ENCODE measurements at regions of chr20 and their contacts with region 1.

Region 1: DNA sequence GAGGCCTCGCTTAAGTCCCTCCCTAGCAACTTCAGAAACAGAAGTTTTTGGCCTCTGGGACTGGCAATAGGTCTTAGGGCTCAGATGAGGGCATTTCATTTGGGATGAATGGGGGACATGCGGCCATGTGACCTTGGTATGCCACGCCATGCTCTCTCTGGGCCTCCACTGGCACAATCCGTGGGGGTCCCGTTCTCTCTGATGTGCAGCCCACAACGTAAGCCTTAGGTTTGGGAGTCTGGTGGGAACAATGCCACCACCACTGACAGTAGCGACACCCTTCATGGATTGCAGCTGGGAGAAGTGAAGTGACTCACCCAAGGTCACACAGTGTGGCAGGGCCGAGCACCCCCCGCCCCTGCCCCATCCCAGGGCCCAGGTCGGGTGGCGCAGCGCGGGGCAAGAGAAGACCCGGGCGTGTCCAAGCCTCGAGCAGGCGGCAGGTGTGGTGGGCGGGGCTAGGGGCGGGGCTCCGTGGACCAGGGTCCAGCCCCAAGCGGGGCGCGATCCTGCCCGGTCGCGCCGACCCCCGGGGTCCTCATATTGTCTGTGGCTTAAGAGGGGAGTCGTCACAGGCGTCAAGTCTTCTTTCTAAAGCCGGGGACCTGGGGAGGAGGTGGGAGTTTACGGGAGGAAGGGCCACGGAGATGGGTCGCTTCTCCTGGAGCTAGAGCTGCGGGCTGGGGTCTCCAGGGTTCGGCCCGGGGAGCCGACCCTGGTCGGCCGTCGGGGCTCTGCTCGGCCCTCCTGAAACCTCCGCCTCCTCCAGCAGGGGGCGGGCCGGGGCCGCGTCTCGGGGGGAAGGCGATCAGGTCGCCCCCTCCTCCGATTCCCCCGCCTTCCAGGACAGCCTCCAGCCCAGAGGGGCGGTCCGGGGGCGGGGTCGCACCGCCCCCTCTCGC is 698 bp upstream of the CEBPB start:
- DNase-seq: peak; percentile 85
- H3K4me3 Mint-ChIP-seq: peak overlapping the region; percentile 90
- H3K27ac Mint-ChIP-seq: no peak overlapping the region
- H3K4me1 Mint-ChIP-seq: peaks cover 35% of the 10 kb centered on the region
- H3K27me3 Mint-ChIP-seq: no peaks in the 10 kb centered on the region
- CTCF ChIP-seq: peak; percentile 69

Region 2: DNA sequence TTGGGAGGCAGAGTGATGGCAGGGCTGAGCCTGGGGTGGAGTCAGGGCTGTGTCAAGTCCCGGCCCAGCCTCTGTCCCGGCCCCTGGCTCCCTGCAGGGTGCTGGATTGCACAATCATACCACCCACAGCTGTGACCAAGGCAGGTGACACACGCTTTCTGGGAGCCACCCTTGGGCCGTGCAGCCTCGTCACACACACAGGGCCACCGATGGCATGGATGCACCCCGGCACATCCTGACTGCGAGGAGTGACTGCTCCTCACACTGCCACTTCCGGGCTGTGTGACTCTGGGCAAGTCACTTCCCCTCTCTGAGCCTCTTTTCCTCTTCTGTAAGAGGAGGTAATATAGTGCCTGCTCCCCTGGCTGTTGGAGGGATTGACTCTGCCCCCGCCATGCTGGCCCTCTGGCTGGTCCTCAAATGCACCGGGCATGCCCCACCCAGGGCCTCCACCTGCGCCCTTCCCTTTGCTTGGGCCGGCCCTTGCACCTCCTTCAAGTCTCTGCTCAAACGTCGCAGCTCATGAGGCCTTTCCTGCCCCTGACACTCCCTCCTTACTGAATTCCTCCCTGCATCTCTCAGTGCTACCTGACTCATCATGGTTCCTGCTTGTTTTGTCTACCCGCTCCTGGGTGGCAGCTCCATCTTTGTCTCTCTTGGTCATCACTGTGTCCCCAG is 94.1 kb after region 1 on chr20:
- CTCF ChIA-PET with region 1: no interaction called
- POLR2A ChIA-PET with region 1: interaction called, 3 read pairs
- intact Hi-C with region 1: loop called (anchors 1 kb)
- DNase-seq: peak; percentile 67
- H3K4me3 Mint-ChIP-seq: no peak overlapping the region
- H3K27ac Mint-ChIP-seq: peak overlapping the region; percentile 1
- H3K4me1 Mint-ChIP-seq: peaks cover 23% of the 10 kb centered on the region
- H3K27me3 Mint-ChIP-seq: no peaks in the 10 kb centered on the region
- CTCF ChIP-seq: no peak

Region 3: DNA sequence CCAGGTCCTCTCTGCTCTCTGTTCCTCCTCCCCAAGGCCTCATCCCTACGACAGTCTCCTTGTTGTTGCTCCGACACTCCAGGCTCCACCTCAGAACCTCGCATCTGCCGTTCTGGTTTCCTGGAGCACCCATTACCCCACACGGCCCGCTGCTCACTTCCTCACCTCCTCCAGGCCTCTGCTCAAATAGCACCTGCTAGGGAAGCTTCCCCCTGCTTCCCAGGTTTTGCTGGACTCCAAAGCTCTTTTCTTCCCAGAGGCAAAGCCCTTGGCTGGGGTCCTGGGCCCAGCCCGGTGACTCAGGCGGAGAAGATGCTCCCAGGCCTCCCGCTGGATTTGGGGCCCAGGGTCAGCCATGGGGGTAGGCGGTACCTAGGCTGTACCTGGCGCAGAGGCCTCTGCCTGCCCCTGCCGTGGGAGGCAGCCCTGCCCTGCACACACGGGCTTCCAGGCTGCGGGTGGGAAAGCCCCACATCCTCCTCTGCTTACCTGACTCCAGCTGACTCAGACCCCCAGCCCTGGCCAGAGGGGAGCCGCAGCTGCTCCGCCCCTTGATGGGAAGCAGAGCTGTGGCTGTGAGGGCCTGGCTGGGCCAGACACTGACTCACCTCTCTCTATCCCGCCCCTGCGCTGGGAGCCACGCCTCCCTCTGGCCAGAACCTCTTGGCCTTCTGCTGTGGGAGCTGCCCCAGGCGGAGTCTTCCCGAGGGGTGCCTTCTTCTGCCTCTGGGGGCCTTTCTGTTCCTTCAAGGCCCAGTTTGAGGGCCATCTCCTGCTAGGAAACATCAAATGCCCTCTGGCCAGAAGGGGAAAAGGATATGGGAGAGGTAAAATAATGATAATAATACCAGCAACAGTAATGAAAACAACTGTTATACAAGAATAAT is 131.2 kb after region 1 on chr20:
- CTCF ChIA-PET with region 1: no interaction called
- POLR2A ChIA-PET with region 1: interaction called, 19 read pairs
- intact Hi-C with region 1: no loop called
- DNase-seq: peak; percentile 97
- H3K4me3 Mint-ChIP-seq: peak overlapping the region; percentile 85
- H3K27ac Mint-ChIP-seq: peak overlapping the region; percentile 92
- H3K4me1 Mint-ChIP-seq: peaks cover 32% of the 10 kb centered on the region
- H3K27me3 Mint-ChIP-seq: no peaks in the 10 kb centered on the region
- CTCF ChIP-seq: no peak

Region 4: GRCh38 chr20:50415516-50416113 is 225.7 kb after region 1 on chr20:
- CTCF ChIA-PET with region 1: interaction called, 6 read pairs
- POLR2A ChIA-PET with region 1: interaction called, 79 read pairs
- intact Hi-C with region 1: no loop called
- DNase-seq: peak; percentile 99
- H3K4me3 Mint-ChIP-seq: peak overlapping the region; percentile 59
- H3K27ac Mint-ChIP-seq: peak overlapping the region; percentile 96
- H3K4me1 Mint-ChIP-seq: peaks cover 43% of the 10 kb centered on the region
- H3K27me3 Mint-ChIP-seq: no peaks in the 10 kb centered on the region
- CTCF ChIP-seq: no peak

Region 5: GRCh38 chr20:50575847-50576720 is 386.2 kb after region 1 on chr20:
- CTCF ChIA-PET with region 1: interaction called, 11 read pairs
- POLR2A ChIA-PET with region 1: interaction called, 8 read pairs
- intact Hi-C with region 1: loop called (anchors 1 kb)
- DNase-seq: peak; percentile 63
- H3K4me3 Mint-ChIP-seq: no peak overlapping the region
- H3K27ac Mint-ChIP-seq: no peak overlapping the region
- H3K4me1 Mint-ChIP-seq: peaks cover 21% of the 10 kb centered on the region
- H3K27me3 Mint-ChIP-seq: no peaks in the 10 kb centered on the region
- CTCF ChIP-seq: peak; percentile 56

Region 6: DNA sequence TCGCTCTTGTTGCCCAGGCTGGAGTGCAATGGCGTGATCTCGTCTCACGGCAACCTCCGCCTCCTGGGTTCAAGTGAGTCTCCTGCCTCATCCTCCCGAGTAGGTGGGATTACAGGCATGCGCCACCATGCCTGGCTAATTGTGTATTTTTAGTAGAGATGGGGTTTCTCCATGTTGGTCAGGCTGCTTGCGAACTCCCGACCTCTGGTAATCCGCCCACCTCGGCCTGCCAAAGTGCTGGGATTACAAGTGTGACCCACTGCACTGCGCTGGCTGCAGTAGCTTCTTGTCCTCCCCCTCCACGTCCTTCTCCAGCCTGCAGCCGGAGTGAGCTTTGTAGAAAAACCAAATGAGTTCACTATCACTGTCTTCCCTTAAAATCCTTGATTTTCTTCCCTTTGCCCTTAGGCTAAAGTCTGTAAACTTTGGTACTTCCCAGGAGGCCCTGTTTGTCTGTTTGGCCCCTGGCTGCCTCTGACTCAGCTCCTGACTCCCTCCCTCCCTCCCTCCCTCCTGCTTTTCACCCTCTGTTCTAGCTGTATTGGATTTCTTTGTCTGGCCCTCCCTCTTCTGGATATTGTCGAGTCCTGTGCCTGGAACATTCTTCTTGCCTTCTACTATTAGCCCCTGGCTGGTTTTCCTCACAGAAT is 554.3 kb after region 1 on chr20:
- CTCF ChIA-PET with region 1: interaction called, 5 read pairs
- POLR2A ChIA-PET with region 1: interaction called, 4 read pairs
- intact Hi-C with region 1: loop called (anchors 5 kb)
- DNase-seq: peak; percentile 88
- H3K4me3 Mint-ChIP-seq: peak overlapping the region; percentile 35
- H3K27ac Mint-ChIP-seq: peak overlapping the region; percentile 51
- H3K4me1 Mint-ChIP-seq: peaks cover 26% of the 10 kb centered on the region
- H3K27me3 Mint-ChIP-seq: no peaks in the 10 kb centered on the region
- CTCF ChIP-seq: peak; percentile 34

Measured in MCF 10A (cell line).